PC-3 (cell line): ENCODE measurements at regions of chr7 and their contacts with region 1.

Region 1: DNA sequence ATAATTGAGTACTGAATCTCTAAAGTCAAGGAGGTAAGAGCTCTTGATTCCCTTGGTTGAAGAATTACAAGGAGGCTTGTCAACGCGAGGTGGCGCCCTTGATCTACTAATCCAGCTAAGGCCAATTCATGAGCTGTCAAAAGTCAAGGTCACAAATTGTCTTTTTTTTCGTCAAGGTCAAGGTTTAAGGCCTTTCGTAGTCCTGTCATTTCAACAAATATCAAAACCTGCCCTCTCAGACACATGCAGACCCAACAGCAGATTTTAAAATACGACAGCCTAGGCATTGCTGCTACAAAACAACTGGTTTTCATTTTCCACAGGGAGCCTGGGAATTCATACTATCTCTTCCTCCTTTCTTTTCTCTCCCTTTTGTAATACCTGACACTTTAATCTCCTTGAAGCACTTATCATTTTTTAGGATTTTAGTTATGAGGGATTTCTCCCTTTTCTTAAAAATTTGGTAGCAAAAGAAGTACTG is 3.6 kb downstream of the HOXA13 start:
- DNase-seq: peak; percentile 89
- ATAC-seq: no peak
- H3K4me3 ChIP-seq: peak overlapping the region; percentile 91
- H3K27ac ChIP-seq: peak overlapping the region; percentile 21; the same call in 1 of the 2 replicates
- H3K4me1 ChIP-seq: peaks cover 14% of the 10 kb centered on the region
- H3K27me3 ChIP-seq: no peaks in the 10 kb centered on the region
- CTCF ChIP-seq: peak; percentile 91

Region 2: GRCh38 chr7:27235387-27236311 is 39.3 kb after region 1 on chr7:
- CTCF ChIA-PET with region 1: no interaction called
- POLR2A ChIA-PET with region 1: no interaction called
- intact Hi-C with region 1: loop called (anchors 1 kb)
- DNase-seq: peak; percentile 62
- ATAC-seq: peak; percentile 76
- H3K4me3 ChIP-seq: peak overlapping the region; percentile 72
- H3K27ac ChIP-seq: no peak overlapping the region
- H3K4me1 ChIP-seq: peaks cover 9% of the 10 kb centered on the region; the same call in 1 of the 2 replicates
- H3K27me3 ChIP-seq: no peaks in the 10 kb centered on the region
- CTCF ChIP-seq: peak; percentile 75

Region 3: DNA sequence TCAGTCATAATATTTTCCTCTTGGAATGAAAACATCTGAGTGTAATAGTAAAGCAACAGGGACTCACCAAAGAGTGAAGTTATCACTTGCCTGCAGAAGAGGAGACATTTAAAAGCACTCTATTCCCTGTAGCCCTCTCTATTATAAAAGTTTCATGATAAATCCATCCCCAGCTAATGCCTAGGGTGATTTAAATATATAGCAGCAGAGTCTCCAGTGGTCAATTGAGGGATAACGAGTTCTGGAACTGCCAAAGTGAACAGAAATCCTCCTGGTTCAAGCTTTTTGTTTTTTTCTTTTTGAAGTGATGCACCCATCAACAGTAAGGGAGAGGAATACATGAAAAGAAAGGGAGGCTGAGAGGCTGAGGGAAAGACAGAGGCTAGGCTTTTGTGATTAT is 133.6 kb after region 1 on chr7:
- CTCF ChIA-PET with region 1: no interaction called
- POLR2A ChIA-PET with region 1: no interaction called
- intact Hi-C with region 1: no loop called
- DNase-seq: peak; percentile 30
- ATAC-seq: peak; percentile 46; the same call in 1 of the 2 replicates
- H3K4me3 ChIP-seq: no peak overlapping the region
- H3K27ac ChIP-seq: no peak overlapping the region
- H3K4me1 ChIP-seq: no peaks in the 10 kb centered on the region
- H3K27me3 ChIP-seq: no peaks in the 10 kb centered on the region
- CTCF ChIP-seq: peak; percentile 50

Region 4: GRCh38 chr7:27662490-27663205 is 466.3 kb after region 1 on chr7 and contains the start of gene HIBADH:
- CTCF ChIA-PET with region 1: interaction called, 5 read pairs
- POLR2A ChIA-PET with region 1: interaction called, 9 read pairs
- intact Hi-C with region 1: loop called (anchors 2 kb)
- DNase-seq: peak; percentile 99
- ATAC-seq: peak; percentile 98
- H3K4me3 ChIP-seq: peak within 1 kb of the TSS; percentile 81
- H3K27ac ChIP-seq: peak within 1 kb of the TSS; percentile 60
- H3K4me1 ChIP-seq: 0 out of 2 replicates have a peak, but pooled peaks cover 7% of the 10 kb centered on the region
- H3K27me3 ChIP-seq: no peaks in the 10 kb centered on the region
- CTCF ChIP-seq: no peak
- total RNA-seq, gene HIBADH: 43.7 and 45.8 TPM in 2 replicates

Region 5: GRCh38 chr7:27739909-27740448 is 543.7 kb after region 1 on chr7 and contains the start of gene TAX1BP1:
- CTCF ChIA-PET with region 1: interaction called, 5 read pairs
- POLR2A ChIA-PET with region 1: interaction called, 4 read pairs
- intact Hi-C with region 1: loop called (anchors 5 kb)
- DNase-seq: peak; percentile 93
- ATAC-seq: peak; percentile 77
- H3K4me3 ChIP-seq: peak within 1 kb of the TSS; percentile 89
- H3K27ac ChIP-seq: peak within 1 kb of the TSS; percentile 71
- H3K4me1 ChIP-seq: peaks cover 40% of the 10 kb centered on the region
- H3K27me3 ChIP-seq: no peaks in the 10 kb centered on the region
- CTCF ChIP-seq: no peak
- total RNA-seq, gene TAX1BP1: 49.5 and 58.5 TPM in 2 replicates

Region 6: GRCh38 chr7:28020302-28020940 is 824.1 kb after region 1 on chr7:
- CTCF ChIA-PET with region 1: no interaction called
- POLR2A ChIA-PET with region 1: no interaction called
- intact Hi-C with region 1: loop called (anchors 1 kb)
- DNase-seq: peak; percentile 82
- ATAC-seq: peak; percentile 93
- H3K4me3 ChIP-seq: no peak overlapping the region; the same call in 1 of the 2 replicates
- H3K27ac ChIP-seq: no peak overlapping the region
- H3K4me1 ChIP-seq: peaks cover 11% of the 10 kb centered on the region
- H3K27me3 ChIP-seq: no peaks in the 10 kb centered on the region
- CTCF ChIP-seq: peak; percentile 89